ENCODE measurements at regions of chr2 and their contacts with region 1.

Region 1: GRCh38 chr2:237691908-237692600 is 64.7 kb downstream of the LRRFIP1 start:
- DNase-seq: peak; percentile 91
- H3K4me3 Mint-ChIP-seq: peak overlapping the region; percentile 83
- H3K27ac Mint-ChIP-seq: peak overlapping the region; percentile 98
- H3K4me1 Mint-ChIP-seq: peaks cover 51% of the 10 kb centered on the region
- H3K27me3 Mint-ChIP-seq: no peaks in the 10 kb centered on the region
- CTCF ChIP-seq: no peak

Region 2: GRCh38 chr2:237590272-237591140 is 101.5 kb before region 1 on chr2 and contains the start of gene RAB17:
- CTCF ChIA-PET with region 1: no interaction called
- POLR2A ChIA-PET with region 1: interaction called, 19 read pairs
- intact Hi-C with region 1: no loop called
- DNase-seq: peak; percentile 71
- H3K4me3 Mint-ChIP-seq: peak within 1 kb of the TSS; percentile 77
- H3K27ac Mint-ChIP-seq: peak within 1 kb of the TSS; percentile 90
- H3K4me1 Mint-ChIP-seq: peaks cover 13% of the 10 kb centered on the region
- H3K27me3 Mint-ChIP-seq: no peaks in the 10 kb centered on the region
- CTCF ChIP-seq: no peak
- total RNA-seq, gene RAB17: 10.6 and 17.2 TPM in 2 replicates

Region 3: DNA sequence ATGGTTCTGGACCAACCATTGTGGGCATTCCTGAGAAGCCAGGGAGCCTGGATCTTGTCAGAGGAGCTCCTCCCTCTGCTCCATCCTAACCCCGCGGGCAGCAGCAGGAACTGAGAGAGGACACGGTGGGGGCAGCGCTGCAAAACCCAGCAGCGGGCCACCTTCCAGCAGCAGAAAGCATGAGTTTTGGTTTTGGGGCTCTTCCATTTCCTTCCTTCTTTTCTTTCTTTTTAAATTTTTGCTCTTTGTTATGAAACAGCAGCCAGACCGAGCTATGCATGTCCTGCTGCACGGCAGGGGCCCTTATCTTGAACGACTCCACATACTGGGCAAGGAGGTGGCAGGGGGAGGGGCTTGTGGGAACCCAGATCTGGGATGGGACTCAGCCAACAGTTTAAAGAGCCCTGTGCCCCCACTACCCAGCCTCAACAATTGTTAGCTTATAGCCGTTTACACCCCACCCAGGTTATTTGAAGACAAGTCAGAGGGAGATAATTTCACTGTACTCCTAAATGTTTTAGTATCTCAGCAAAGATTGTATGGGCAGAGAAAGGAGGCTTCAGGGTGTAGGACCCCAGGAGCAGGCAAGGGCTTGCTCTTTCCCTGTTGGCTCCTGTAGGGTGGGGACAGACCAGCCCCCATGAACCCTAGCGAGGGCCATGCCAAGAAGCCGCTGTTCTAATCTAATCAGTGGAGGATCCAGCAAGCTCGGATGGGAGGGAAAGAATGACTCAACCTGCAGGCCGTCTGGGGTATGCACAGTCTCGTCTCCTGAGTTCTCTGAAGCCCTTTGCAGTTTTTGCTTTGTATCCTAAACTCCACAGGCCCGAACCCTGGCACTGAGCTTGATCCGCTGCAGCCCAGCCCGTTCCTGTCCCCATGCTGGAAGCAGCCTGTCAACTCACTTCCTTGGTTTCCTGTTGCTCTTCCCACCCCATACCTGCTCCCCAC is 10.7 kb after region 1 on chr2:
- CTCF ChIA-PET with region 1: interaction called, 3 read pairs
- POLR2A ChIA-PET with region 1: interaction called, 26 read pairs
- intact Hi-C with region 1: no loop called
- DNase-seq: peak; percentile 36
- H3K4me3 Mint-ChIP-seq: peak overlapping the region; percentile 15
- H3K27ac Mint-ChIP-seq: peak overlapping the region; percentile 91
- H3K4me1 Mint-ChIP-seq: peaks cover 29% of the 10 kb centered on the region
- H3K27me3 Mint-ChIP-seq: no peaks in the 10 kb centered on the region
- CTCF ChIP-seq: no peak

Region 4: DNA sequence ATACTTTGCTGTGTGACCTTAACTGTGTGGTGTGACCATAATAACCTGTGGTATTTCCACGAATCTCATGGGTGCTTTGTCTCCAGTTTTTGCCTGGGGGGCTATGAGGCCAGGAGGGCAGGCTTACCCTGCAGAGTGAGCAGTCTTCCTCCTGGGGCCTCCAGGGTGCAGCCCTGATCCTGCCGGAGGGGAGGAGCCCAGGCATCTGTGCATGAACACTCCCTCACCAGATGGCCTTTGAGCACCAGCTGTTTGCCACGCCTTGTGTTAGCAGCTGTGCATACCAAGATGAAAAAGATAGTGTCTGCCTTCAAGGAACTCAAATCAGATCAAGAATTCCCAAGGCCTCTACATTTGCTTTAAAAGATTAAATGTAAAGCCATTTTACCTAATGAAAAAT is 31.5 kb after region 1 on chr2:
- CTCF ChIA-PET with region 1: interaction called, 5 read pairs
- POLR2A ChIA-PET with region 1: interaction called, 148 read pairs
- intact Hi-C with region 1: no loop called
- DNase-seq: peak; percentile 49
- H3K4me3 Mint-ChIP-seq: no peak overlapping the region
- H3K27ac Mint-ChIP-seq: peak overlapping the region; percentile 16
- H3K4me1 Mint-ChIP-seq: peaks cover 29% of the 10 kb centered on the region
- H3K27me3 Mint-ChIP-seq: no peaks in the 10 kb centered on the region
- CTCF ChIP-seq: no peak

Region 5: DNA sequence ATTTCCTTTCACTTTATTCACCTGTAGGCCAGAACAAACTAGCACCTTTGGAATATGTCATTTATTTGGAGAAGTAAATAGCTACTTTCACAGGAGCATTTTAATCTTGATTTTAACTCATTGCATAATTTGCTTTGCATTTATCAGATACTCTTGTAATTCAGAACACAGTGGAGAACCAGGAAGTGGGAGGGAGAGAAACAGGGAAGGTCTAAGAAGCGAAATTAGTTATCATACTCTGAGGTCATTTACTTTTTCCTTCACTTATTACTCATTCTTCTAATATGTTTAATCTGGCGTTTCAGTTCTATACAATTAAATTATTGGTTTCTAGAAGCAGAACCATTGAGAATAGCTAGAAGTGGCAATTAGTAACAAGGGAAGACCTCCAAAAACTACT is 127.2 kb after region 1 on chr2:
- CTCF ChIA-PET with region 1: no interaction called
- POLR2A ChIA-PET with region 1: interaction called, 12 read pairs
- intact Hi-C with region 1: no loop called
- DNase-seq: no peak
- H3K4me3 Mint-ChIP-seq: no peak overlapping the region
- H3K27ac Mint-ChIP-seq: no peak overlapping the region
- H3K4me1 Mint-ChIP-seq: peaks cover 19% of the 10 kb centered on the region
- H3K27me3 Mint-ChIP-seq: no peaks in the 10 kb centered on the region
- CTCF ChIP-seq: no peak